Sigmoid colon (tissue), 7 donors: ENCODE measurements at regions of chr16 and their contacts with region 1.

Region 1: DNA sequence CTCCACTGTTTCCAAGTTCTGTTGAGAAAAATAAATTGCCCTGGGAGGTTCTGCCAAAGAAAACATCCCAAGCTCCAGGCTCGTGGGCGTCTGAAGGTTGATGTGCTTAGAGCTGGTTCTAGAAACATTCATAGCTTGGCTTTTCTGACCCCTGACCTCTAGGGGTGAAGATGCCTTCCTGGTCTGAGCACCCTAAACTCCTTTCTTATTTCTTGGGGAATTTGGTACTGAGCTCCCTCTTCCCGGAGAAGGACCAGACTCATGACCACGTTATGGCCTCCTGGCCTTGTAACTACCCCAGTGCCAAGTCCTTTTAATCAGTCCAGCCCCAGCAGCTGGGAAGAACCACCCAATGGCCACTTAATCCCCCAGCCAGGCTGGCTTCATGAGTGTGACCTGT is 66.4 kb downstream of the MYH11 start:
- DNase-seq: no peak
- H3K4me3 ChIP-seq: no peak overlapping the region
- H3K27ac ChIP-seq: peak overlapping the region; percentile 67 to 98 (median 84)
- H3K4me1 ChIP-seq: peaks cover 0 to 98% (median 89%) of the 10 kb centered on the region in 4 donors
- H3K27me3 ChIP-seq: no peaks in the 10 kb centered on the region
- CTCF ChIP-seq: no peak
- EP300 ChIP-seq: no peak
- POLR2A ChIP-seq: no peak

Region 2: GRCh38 chr16:15749366-15749765 is 41.1 kb before region 1 on chr16:
- intact Hi-C with region 1: no loop called
- DNase-seq: no peak
- H3K4me3 ChIP-seq: no peak overlapping the region
- H3K27ac ChIP-seq: peak overlapping the region; percentile 39 to 95 (median 70)
- H3K4me1 ChIP-seq: peaks cover 0 to 43% (median 22%) of the 10 kb centered on the region in 4 donors
- H3K27me3 ChIP-seq: no peaks in the 10 kb centered on the region
- CTCF ChIP-seq: no peak
- EP300 ChIP-seq: no peak
- POLR2A ChIP-seq: no peak

Region 3: GRCh38 chr16:15811481-15812400 is 21.3 kb after region 1 on chr16:
- intact Hi-C with region 1: loop called (anchors 1 kb)
- DNase-seq: peak; percentile 72
- H3K4me3 ChIP-seq: peak overlapping the region in 2 of 4 donors; percentile 22 to 31
- H3K27ac ChIP-seq: peak overlapping the region; percentile 79 to 98 (median 90)
- H3K4me1 ChIP-seq: peaks cover 0 to 96% (median 82%) of the 10 kb centered on the region in 4 donors
- H3K27me3 ChIP-seq: no peaks in the 10 kb centered on the region
- CTCF ChIP-seq: no peak
- EP300 ChIP-seq: peak in 3 of 4 donors; percentile 36 to 78 (median 61)
- POLR2A ChIP-seq: no peak

Region 4: DNA sequence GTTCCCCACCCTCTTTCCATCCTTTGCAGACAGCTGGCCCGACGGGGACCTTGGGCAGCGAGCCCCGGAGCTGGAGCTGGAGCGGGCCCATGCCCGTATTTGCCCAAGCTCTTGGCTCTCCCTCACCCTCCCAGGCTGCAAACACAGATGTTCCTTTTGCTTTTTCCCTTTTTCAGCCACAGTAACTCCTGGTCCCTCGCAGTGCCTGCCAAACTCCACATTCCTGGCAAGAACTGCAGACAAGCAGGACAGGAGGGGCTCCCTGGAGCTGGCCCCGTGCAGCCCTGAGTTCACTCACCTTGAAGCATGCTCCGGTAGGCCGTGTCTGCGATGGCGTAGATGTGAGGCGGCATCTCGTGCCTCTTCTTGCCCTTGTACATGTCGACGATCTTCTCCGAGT is 32.5 kb after region 1 on chr16:
- intact Hi-C with region 1: no loop called
- DNase-seq: peak; percentile 97
- H3K4me3 ChIP-seq: no peak overlapping the region
- H3K27ac ChIP-seq: peak overlapping the region; percentile 85 to 98 (median 96)
- H3K4me1 ChIP-seq: peaks cover 0 to 98% (median 96%) of the 10 kb centered on the region in 4 donors
- H3K27me3 ChIP-seq: no peaks in the 10 kb centered on the region
- CTCF ChIP-seq: no peak
- EP300 ChIP-seq: peak; percentile 63 to 91 (median 78)
- POLR2A ChIP-seq: no peak